Mammary epithelial cell (primary cell): ENCODE measurements at regions of chr18 and their contacts with region 1.

Region 1: GRCh38 chr18:20996418-20996817 is 115.2 kb downstream of the ROCK1 start:
- DNase-seq: no peak
- H3K4me3 ChIP-seq: no peak overlapping the region
- H3K27ac ChIP-seq: no peak overlapping the region
- H3K4me1 ChIP-seq: peaks cover 8% of the 10 kb centered on the region
- H3K27me3 ChIP-seq: no peaks in the 10 kb centered on the region
- CTCF ChIP-seq: no peak

Region 2: GRCh38 chr18:21053127-21053526 is 56.7 kb after region 1 on chr18:
- CTCF ChIA-PET with region 1: no interaction called
- dilution Hi-C with region 1: no loop called
- in situ Hi-C with region 1: loop called in 1 of 2 experiments (anchors 10 kb)
- intact Hi-C with region 1: no loop called
- DNase-seq: peak; percentile 87
- H3K4me3 ChIP-seq: no peak overlapping the region
- H3K27ac ChIP-seq: peak overlapping the region; percentile 68
- H3K4me1 ChIP-seq: peaks cover 37% of the 10 kb centered on the region
- H3K27me3 ChIP-seq: no peaks in the 10 kb centered on the region
- CTCF ChIP-seq: no peak

Region 3: DNA sequence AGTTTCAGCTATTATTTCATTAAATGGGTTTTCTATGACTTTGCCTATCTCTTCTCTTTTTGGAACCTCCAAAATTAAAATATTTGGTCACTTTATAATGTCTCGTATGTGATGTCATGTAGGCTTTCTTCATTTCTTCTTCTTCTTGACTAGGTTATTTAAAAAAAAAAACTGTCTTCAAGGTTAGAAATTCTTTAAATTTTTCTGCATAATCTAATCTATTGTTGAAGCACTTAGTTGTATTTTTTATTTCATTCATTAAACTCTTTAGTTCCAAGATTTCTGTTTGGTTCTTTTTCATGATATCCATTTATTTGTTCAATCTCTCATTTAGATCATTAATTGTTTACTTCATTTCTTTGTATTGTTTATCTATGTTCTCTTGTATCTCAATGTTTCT is 159.0 kb after region 1 on chr18:
- CTCF ChIA-PET with region 1: no interaction called
- dilution Hi-C with region 1: no loop called
- in situ Hi-C with region 1: no loop called
- intact Hi-C with region 1: no loop called
- DNase-seq: no peak
- H3K4me3 ChIP-seq: no peak overlapping the region
- H3K27ac ChIP-seq: no peak overlapping the region
- H3K4me1 ChIP-seq: no peaks in the 10 kb centered on the region
- H3K27me3 ChIP-seq: no peaks in the 10 kb centered on the region
- CTCF ChIP-seq: no peak

Region 4: DNA sequence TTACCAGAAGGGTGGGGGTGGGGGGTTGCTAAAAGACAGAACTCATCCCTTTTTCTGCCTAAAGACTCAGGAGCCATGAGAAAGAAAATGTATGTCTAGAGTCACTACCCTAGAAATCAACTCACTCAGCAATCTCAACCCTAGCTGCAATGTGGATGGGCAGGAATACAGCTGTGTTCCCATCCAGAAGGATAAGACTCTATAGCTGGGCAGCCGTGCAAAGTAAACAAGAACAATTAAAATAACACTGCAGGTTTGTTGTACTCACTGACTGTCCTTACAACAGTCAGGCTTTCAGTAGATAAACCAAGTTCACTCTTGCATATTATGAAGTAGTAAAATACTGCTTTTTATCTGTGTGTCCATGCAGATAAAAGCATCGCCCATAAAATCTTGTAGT is 530.0 kb after region 1 on chr18:
- CTCF ChIA-PET with region 1: no interaction called
- dilution Hi-C with region 1: no loop called
- in situ Hi-C with region 1: no loop called
- intact Hi-C with region 1: no loop called
- DNase-seq: no peak
- H3K4me3 ChIP-seq: no peak overlapping the region
- H3K27ac ChIP-seq: no peak overlapping the region
- H3K4me1 ChIP-seq: no peaks in the 10 kb centered on the region
- H3K27me3 ChIP-seq: no peaks in the 10 kb centered on the region
- CTCF ChIP-seq: no peak